ENCODE measurements at regions of chr13 and their contacts with region 1.

Region 1: DNA sequence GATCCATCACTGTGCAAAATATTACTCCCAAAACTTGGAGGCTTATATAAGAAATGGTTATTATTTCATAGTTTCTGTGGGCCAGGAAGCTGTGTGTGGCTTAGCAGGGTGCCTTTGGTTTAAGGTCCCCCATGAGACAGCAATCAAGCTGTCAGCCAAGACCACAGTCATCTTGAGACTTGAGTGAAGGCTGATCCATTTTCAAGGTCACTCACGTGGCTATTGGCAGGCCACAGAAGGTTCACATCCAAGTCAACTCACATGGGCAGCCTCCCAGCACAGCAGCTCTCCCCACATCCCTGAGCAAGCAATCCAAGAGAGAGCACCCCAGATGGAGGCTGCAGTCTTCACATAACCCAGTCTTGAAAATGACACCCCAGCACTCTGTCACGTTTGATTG is 537.4 kb downstream of the MYO16 start:
- DNase-seq: no peak
- H3K4me3 ChIP-seq: no peak overlapping the region
- H3K27ac ChIP-seq: no peak overlapping the region
- H3K4me1 ChIP-seq: peaks cover 11% of the 10 kb centered on the region
- H3K27me3 ChIP-seq: no peaks in the 10 kb centered on the region
- CTCF ChIP-seq: no peak

Region 2: GRCh38 chr13:108686027-108686426 is 480.8 kb before region 1 on chr13:
- CTCF ChIA-PET with region 1: no interaction called
- POLR2A ChIA-PET with region 1: no interaction called
- intact Hi-C with region 1: no loop called
- DNase-seq: no peak
- H3K4me3 ChIP-seq: no peak overlapping the region
- H3K27ac ChIP-seq: no peak overlapping the region
- H3K4me1 ChIP-seq: no peaks in the 10 kb centered on the region
- H3K27me3 ChIP-seq: peaks cover 5% of the 10 kb centered on the region; the same call in 1 of the 2 replicates
- CTCF ChIP-seq: no peak

Region 3: GRCh38 chr13:109196948-109197347 is 30.1 kb after region 1 on chr13:
- CTCF ChIA-PET with region 1: no interaction called
- POLR2A ChIA-PET with region 1: interaction called, 15 read pairs
- intact Hi-C with region 1: no loop called
- DNase-seq: no peak
- H3K4me3 ChIP-seq: no peak overlapping the region
- H3K27ac ChIP-seq: no peak overlapping the region
- H3K4me1 ChIP-seq: no peaks in the 10 kb centered on the region
- H3K27me3 ChIP-seq: no peaks in the 10 kb centered on the region
- CTCF ChIP-seq: peak; percentile 38

Region 4: GRCh38 chr13:109226631-109227030 is 59.8 kb after region 1 on chr13:
- CTCF ChIA-PET with region 1: no interaction called
- POLR2A ChIA-PET with region 1: no interaction called
- intact Hi-C with region 1: no loop called
- DNase-seq: no peak
- H3K4me3 ChIP-seq: no peak overlapping the region
- H3K27ac ChIP-seq: no peak overlapping the region
- H3K4me1 ChIP-seq: no peaks in the 10 kb centered on the region
- H3K27me3 ChIP-seq: no peaks in the 10 kb centered on the region
- CTCF ChIP-seq: no peak

Measured in PC-9 (cell line).